Tibial artery (tissue), 4 donors: ENCODE measurements at regions of chr16 and their contacts with region 1.

Region 1: GRCh38 chr16:30698139-30698815 is 694 bp upstream of the SRCAP start:
- DNase-seq: peak; percentile 99
- H3K4me3 ChIP-seq: peak overlapping the region; percentile 81 to 97
- H3K27ac ChIP-seq: peak overlapping the region; percentile 96 to 99
- H3K4me1 ChIP-seq: peaks cover 0 to 31% (median 12%) of the 10 kb centered on the region in 4 donors
- H3K27me3 ChIP-seq: no peaks in the 10 kb centered on the region
- CTCF ChIP-seq: no peak

Region 2: DNA sequence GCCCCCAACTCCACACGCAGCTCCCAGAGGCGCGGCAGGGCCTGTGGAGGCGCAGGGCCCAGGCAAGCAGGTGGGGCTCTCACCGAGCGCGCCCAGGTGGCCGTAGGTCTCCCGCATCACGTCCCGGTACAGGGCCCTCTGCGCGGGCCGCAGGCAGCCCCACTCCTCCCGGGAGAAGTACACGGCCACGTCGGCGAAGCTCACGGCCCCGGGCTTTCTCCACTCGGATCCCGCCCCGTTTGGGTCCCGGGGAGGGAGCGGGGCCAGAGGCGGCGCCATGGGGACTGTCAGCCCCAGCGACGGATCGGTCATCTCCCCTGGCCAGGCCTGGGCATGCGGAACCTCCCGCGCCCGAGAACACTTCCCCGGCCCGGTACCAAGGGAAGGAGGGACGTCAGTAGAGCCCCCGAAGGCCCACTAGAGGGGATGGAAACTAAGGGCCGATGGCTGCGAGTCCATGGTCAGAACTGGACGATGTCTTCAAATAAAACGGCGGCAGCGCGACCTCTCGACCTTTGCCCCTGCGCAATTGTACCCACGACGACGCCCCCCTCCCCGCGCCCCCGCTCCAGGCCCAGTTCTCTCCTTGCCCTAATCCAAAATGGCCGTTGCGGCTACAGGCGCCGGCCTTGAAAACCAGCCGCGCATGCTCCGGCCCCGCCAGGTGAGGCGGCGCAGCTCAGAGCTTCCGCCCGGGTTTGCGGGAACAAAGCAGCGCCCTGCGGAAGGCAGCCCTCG is 163.7 kb before region 1 on chr16 and contains the start of gene ZNF747:
- intact Hi-C with region 1: loop called (anchors 5 kb)
- DNase-seq: peak; percentile 93 to 96
- H3K4me3 ChIP-seq: peak within 1 kb of the TSS; percentile 75 to 83
- H3K27ac ChIP-seq: peak within 1 kb of the TSS; percentile 94 to 99
- H3K4me1 ChIP-seq: peaks cover 0 to 37% (median 21%) of the 10 kb centered on the region in 4 donors
- H3K27me3 ChIP-seq: no peaks in the 10 kb centered on the region
- CTCF ChIP-seq: no peak

Region 3: GRCh38 chr16:30657866-30658730 is 40.2 kb before region 1 on chr16 and contains the start of gene FBRS:
- intact Hi-C with region 1: loop called (anchors 2 kb)
- DNase-seq: peak; percentile 100
- H3K4me3 ChIP-seq: peak within 1 kb of the TSS; percentile 79 to 83
- H3K27ac ChIP-seq: peak within 1 kb of the TSS; percentile 97 to 99
- H3K4me1 ChIP-seq: peaks cover 0 to 50% (median 41%) of the 10 kb centered on the region in 4 donors
- H3K27me3 ChIP-seq: no peaks in the 10 kb centered on the region
- CTCF ChIP-seq: peak; percentile 72 to 80